Naive thymus-derived CD4-positive, alpha-beta T cell (primary cell): ENCODE measurements at regions of chr16 and their contacts with region 1.

Region 1: GRCh38 chr16:68064791-68065365 is 20.3 kb upstream of the NFATC3 start:
- DNase-seq: peak; percentile 45 to 72 (median 65)
- ATAC-seq: peak; percentile 84
- H3K4me3 ChIP-seq: no peak overlapping the region
- H3K4me3 Mint-ChIP-seq: peak overlapping the region; percentile 3 to 69 (median 34)
- H3K27ac ChIP-seq: peak overlapping the region; percentile 52
- H3K27ac Mint-ChIP-seq: peak overlapping the region; percentile 65 to 90 (median 83)
- H3K4me1 ChIP-seq: peaks cover 56 to 67% of the 10 kb centered on the region in 2 donors
- H3K4me1 Mint-ChIP-seq: peaks cover 60 to 86% (median 76%) of the 10 kb centered on the region in 7 donors
- H3K27me3 ChIP-seq: no peaks in the 10 kb centered on the region
- H3K27me3 Mint-ChIP-seq: no peaks in the 10 kb centered on the region

Region 2: DNA sequence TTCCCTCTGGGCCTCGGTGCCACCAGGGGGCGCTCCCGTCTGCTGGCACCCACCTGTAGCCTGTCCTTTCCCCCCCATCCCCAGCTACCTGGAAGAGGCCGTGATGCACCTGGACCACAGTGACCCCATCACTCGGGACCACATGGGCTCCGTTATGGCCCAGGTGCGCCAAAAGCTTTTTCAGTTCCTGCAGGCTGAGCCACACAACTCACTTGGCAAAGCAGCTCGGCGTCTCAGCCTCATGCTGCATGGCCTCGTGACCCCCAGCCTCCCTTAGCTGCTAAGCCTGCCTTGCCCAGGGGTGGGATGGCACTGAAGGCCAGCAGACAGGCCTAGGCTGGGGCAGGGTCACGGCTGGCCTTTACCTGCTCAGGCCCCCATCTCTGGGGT is 181.0 kb before region 1 on chr16:
- CTCF ChIA-PET with region 1: interaction called, 19 read pairs
- POLR2A ChIA-PET with region 1: no interaction called
- intact Hi-C with region 1: loop called in 1 of 2 experiments (anchors 1 kb)
- DNase-seq: peak; percentile 62 to 83 (median 74)
- ATAC-seq: peak; percentile 84
- H3K4me3 ChIP-seq: no peak overlapping the region
- H3K4me3 Mint-ChIP-seq: no peak overlapping the region
- H3K27ac ChIP-seq: no peak overlapping the region
- H3K27ac Mint-ChIP-seq: peak overlapping the region in 4 of 9 donors; percentile 19 to 42 (median 36)
- H3K4me1 ChIP-seq: no peaks in the 10 kb centered on the region
- H3K4me1 Mint-ChIP-seq: peaks cover 0 to 6% (median 0%) of the 10 kb centered on the region in 7 donors
- H3K27me3 ChIP-seq: no peaks in the 10 kb centered on the region
- H3K27me3 Mint-ChIP-seq: no peaks in the 10 kb centered on the region

Region 3: DNA sequence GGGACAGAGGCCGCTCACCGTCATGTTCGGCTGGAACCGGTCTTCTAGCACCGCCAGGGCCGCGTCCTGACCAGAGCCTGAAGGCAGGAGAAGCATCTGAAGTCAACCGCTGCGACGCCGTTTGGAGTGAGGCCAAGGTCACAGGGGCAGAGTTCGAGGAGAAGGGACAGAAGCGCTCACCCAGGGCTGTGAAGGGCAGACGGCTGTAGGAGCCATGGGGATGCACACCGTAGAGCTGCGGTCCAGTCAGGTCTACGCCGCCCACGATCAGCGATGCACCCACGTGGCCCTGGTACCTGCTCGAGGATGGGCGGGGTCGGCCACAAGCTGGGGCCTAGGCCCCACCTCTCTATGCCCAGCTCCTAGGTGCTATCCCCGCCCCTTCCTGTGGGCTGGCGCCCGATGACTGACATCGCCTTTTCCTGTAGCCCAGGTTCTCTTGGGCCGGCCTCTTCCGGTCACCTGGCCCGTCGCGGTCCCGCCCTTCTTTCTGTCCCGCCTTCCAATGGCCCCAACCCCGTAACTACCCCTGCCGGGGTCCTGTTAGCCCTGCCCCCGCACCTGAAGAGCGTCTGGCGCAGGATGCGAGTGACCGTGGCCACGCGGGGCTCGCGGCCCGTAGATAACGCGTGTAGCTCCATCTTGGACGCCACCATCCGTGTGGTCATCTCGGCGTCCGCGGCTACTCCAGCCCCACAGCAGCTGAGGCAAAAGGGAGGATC is 129.3 kb before region 1 on chr16:
- CTCF ChIA-PET with region 1: no interaction called
- POLR2A ChIA-PET with region 1: no interaction called
- intact Hi-C with region 1: no loop called
- DNase-seq: peak; percentile 71 to 95 (median 91)
- ATAC-seq: peak; percentile 96
- H3K4me3 ChIP-seq: peak overlapping the region; percentile 99
- H3K4me3 Mint-ChIP-seq: peak overlapping the region; percentile 89 to 100 (median 100)
- H3K27ac ChIP-seq: peak overlapping the region; percentile 77
- H3K27ac Mint-ChIP-seq: peak overlapping the region; percentile 87 to 99 (median 99)
- H3K4me1 ChIP-seq: peaks cover 21 to 32% of the 10 kb centered on the region in 2 donors
- H3K4me1 Mint-ChIP-seq: peaks cover 28 to 48% (median 35%) of the 10 kb centered on the region in 7 donors
- H3K27me3 ChIP-seq: no peaks in the 10 kb centered on the region
- H3K27me3 Mint-ChIP-seq: peaks cover 0 to 3% (median 0%) of the 10 kb centered on the region in 5 donors

Region 4: GRCh38 chr16:68040507-68041288 is 24.2 kb before region 1 on chr16:
- CTCF ChIA-PET with region 1: interaction called, 15 read pairs
- POLR2A ChIA-PET with region 1: interaction called, 4 read pairs
- intact Hi-C with region 1: loop called in 1 of 2 experiments (anchors 2 kb)
- DNase-seq: peak; percentile 81 to 95 (median 87)
- ATAC-seq: peak; percentile 100
- H3K4me3 ChIP-seq: no peak overlapping the region
- H3K4me3 Mint-ChIP-seq: peak overlapping the region in 1 of 10 donors; percentile 9
- H3K27ac ChIP-seq: peak overlapping the region; percentile 26
- H3K27ac Mint-ChIP-seq: peak overlapping the region; percentile 28 to 87 (median 61)
- H3K4me1 ChIP-seq: peaks cover 4 to 5% of the 10 kb centered on the region in 2 donors
- H3K4me1 Mint-ChIP-seq: peaks cover 5 to 26% (median 18%) of the 10 kb centered on the region in 7 donors
- H3K27me3 ChIP-seq: no peaks in the 10 kb centered on the region
- H3K27me3 Mint-ChIP-seq: no peaks in the 10 kb centered on the region

Region 5: GRCh38 chr16:68074850-68075555 is 10.1 kb after region 1 on chr16:
- CTCF ChIA-PET with region 1: interaction called, 57 read pairs
- POLR2A ChIA-PET with region 1: interaction called, 300 read pairs
- intact Hi-C with region 1: loop called (anchors 1 kb)
- DNase-seq: peak in 2 of 9 donors; percentile 27 to 67
- ATAC-seq: peak; percentile 77
- H3K4me3 ChIP-seq: peak overlapping the region; percentile 9
- H3K4me3 Mint-ChIP-seq: peak overlapping the region; percentile 32 to 79 (median 53)
- H3K27ac ChIP-seq: no peak overlapping the region
- H3K27ac Mint-ChIP-seq: peak overlapping the region; percentile 14 to 90 (median 76)
- H3K4me1 ChIP-seq: peaks cover 75 to 88% of the 10 kb centered on the region in 2 donors
- H3K4me1 Mint-ChIP-seq: peaks cover 69 to 89% (median 86%) of the 10 kb centered on the region in 7 donors
- H3K27me3 ChIP-seq: no peaks in the 10 kb centered on the region
- H3K27me3 Mint-ChIP-seq: no peaks in the 10 kb centered on the region